ENCODE measurements at regions of chr2 and their contacts with region 1.

Region 1: DNA sequence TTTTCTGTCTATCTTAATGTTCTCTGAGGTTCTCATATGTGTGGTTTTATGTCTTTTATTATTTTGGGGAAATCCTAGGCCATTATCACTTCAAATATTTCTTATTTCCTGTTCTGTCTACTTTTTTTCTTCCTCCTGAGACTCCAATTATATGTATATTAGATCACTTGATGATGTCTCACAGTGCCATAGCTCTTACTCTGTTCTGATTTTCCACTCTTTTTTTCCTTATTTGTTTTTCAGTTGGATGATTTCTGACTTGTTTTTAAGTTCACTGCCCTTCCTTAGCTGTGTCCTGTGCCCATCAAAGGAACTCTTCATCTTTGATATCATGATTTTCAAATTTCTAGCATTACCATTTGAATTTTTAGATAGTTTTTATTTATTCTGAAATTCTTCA is 24.1 kb downstream of the FAM228B start:
- DNase-seq: no peak
- ATAC-seq: no peak
- H3K4me3 ChIP-seq: no peak overlapping the region
- H3K27ac ChIP-seq: no peak overlapping the region
- H3K4me1 ChIP-seq: no peaks in the 10 kb centered on the region
- H3K27me3 ChIP-seq: no peaks in the 10 kb centered on the region
- CTCF ChIP-seq: no peak

Region 2: DNA sequence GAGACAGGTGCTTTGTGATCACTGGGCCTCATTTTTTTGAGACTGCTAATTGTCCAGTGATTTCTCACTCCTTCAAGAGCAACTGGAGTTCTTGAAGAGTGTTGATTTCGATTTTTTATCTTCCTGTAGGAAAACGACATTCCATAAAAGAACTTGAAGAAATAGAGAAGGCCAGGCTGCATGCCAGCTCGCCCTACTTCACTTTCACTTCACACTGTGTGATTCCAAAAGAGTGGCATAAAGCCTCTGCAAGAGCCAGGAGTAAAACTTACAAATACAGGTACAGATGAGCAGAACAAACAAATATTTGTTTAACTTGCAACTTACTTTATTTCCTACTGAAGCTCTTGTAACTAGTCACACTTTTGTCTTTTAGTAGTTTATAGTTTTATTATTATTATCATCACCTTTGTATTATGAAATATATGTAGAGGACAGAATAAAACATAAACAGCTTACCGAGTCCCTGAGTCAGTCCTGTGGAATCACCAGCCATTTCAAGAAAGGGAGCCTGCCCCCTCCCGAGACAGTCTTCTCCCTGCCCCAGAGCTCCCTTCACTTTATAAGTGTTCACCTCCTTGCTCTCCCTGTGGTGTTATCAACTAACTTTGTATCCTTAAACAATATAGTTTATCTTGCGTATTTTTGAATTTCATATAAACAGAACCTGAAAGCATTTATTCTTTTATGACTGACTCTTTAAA is 36.2 kb after region 1 on chr2:
- CTCF ChIA-PET with region 1: no interaction called
- POLR2A ChIA-PET with region 1: no interaction called
- in situ Hi-C with region 1: no loop called
- intact Hi-C with region 1: loop called (anchors 1 kb)
- DNase-seq: no peak
- ATAC-seq: no peak
- H3K4me3 ChIP-seq: no peak overlapping the region
- H3K27ac ChIP-seq: no peak overlapping the region
- H3K4me1 ChIP-seq: no peaks in the 10 kb centered on the region
- H3K27me3 ChIP-seq: no peaks in the 10 kb centered on the region
- CTCF ChIP-seq: no peak

Region 3: GRCh38 chr2:24448797-24449196 is 301.4 kb after region 1 on chr2:
- CTCF ChIA-PET with region 1: no interaction called
- POLR2A ChIA-PET with region 1: no interaction called
- in situ Hi-C with region 1: no loop called
- intact Hi-C with region 1: no loop called
- DNase-seq: no peak
- ATAC-seq: no peak
- H3K4me3 ChIP-seq: no peak overlapping the region
- H3K27ac ChIP-seq: no peak overlapping the region
- H3K4me1 ChIP-seq: no peaks in the 10 kb centered on the region
- H3K27me3 ChIP-seq: no peaks in the 10 kb centered on the region
- CTCF ChIP-seq: no peak